ENCODE measurements at regions of chr12 and their contacts with region 1.

Region 1: DNA sequence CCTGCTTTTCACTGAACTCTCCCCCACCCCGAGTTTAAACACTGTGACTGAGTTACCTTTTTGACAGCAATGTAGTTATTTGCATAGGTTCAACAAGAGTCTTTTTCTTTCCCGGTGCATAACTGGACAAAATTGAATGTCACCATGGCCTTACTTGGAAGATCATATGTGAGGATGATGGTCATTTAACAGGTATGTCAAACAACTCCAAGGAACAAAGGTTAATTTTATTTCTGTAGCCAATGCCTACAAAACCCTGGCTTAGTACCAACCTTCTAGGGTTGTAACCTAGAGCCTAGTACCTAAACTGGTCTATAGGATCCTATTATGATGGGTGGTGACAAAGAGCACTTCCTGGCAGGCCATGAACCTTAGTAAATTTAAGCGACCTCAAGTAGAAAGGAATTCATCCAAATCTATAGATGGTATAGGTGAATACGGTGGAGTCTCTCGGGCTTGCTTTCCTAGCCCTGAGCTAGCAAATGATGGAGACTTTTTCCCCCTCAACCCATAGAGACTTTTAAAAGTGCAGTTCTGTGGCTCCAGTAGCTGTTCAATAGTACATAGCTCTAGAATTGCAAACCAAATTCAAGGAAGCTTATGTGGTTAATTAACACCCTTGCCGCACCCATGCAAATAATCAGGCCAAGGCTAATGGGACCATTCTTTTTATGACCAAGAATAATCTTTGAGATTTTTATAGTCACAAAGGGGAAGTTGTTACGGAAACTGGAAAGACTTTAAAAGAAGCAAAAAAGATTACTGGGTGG is 89.0 kb downstream of the SLC38A1 start:
- DNase-seq: no peak

Region 2: DNA sequence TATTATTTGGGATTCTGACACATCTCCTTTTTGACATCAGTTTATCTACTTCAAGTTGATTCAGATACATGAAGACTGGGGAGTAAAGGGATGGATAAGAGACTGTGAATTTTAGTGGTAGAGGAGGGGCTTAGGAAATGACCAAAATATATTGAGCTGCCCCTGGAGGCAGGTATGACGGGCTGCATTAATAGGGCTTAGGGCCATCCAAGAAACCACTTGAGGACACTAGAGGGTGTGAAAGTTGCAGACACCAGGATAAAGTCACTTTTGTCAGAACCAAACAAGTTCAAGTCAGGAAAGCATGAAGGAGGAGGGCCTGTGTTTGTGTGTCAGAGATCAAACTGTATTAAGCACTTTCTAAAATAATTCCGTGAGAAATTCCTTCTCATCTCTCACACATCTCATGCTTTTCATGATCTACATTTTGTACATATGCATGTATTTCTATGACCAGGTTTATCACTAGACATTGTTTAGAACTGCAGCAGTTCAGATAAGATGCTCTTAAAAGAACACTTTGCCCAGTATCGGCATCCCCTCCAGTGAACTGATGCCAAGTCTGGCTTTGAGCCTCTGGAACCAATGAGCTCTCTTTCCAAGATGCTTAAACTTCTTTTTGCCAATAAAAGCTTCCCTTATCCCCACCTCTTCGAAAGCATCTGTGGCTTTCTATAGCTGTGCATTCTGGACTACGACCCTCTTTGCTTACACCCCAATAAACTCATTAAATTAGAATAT is 48.0 kb before region 1 on chr12:
- intact Hi-C with region 1: no loop called
- DNase-seq: no peak

Region 3: DNA sequence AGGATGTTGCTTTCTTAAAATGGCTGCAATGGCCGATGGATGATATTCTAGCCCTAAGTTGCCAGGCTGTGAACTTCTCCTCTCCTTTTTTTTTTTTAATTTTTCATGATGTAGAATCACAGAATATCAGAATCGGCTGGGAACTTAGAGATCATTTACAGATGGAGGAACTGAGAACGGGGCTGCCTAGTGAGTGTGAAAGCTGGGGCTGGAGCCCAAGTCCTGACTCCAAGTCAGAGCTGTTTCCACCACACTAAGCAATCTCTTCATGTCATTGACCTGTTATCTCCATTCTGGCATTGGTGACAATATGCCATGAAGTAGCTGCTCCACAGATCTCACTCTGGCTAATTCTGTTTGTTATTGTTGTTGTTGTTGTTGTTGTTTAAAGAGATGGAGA is 32.7 kb before region 1 on chr12:
- intact Hi-C with region 1: loop called in 1 of 2 experiments (anchors 5 kb)
- DNase-seq: no peak